A549 (cell line): ENCODE measurements at regions of chr13 and their contacts with region 1.

Region 1: DNA sequence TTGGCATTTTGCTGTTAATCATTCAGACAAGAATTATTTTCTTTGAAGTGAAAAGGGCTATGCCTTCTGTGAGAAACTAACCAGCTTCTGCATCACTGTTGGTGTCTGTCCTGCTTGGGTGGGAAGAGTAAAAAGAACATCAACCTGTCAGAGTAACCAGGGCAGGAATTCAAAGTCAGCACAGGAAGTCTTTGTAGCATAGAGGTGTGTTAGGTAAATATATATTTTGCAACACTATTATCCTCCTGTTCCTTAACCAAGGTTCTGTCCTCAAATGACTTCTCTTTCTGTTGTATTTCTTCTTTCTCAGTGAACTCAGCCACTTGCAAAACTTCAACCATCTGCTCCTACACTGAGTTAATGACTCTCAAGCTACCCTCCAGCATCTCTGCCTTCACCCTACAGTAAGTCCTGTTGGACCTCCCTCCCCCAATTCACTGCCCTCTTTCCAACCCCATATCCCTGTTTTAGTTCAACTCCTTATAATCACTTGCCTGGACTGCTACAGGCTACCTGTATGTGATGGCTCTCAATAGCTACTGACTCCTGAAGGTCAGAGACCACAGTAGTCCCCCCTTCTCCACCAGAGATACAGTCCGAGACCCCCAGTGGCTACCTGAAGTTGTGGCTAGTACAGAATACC is 49.9 kb downstream of the SMAD9 start:
- DNase-seq: no peak
- ATAC-seq: no peak
- H3K4me3 ChIP-seq: no peak overlapping the region
- H3K27ac ChIP-seq: no peak overlapping the region
- H3K4me1 ChIP-seq: no peaks in the 10 kb centered on the region
- CTCF ChIP-seq: no peak
- EP300 ChIP-seq: no peak
- POLR2A ChIP-seq: no peak
- RAD21 ChIP-seq: no peak

Region 2: GRCh38 chr13:36858290-36858689 is 11.9 kb before region 1 on chr13:
- CTCF ChIA-PET with region 1: interaction called, 22 read pairs
- POLR2A ChIA-PET with region 1: no interaction called
- DNase-seq: peak; percentile 7 to 53
- ATAC-seq: peak; percentile 89 to 91
- H3K4me3 ChIP-seq: no peak overlapping the region
- H3K27ac ChIP-seq: no peak overlapping the region
- H3K4me1 ChIP-seq: no peaks in the 10 kb centered on the region
- CTCF ChIP-seq: peak; percentile 48
- EP300 ChIP-seq: no peak
- POLR2A ChIP-seq: no peak
- RAD21 ChIP-seq: peak; percentile 34 to 35; a peak in 4 of 5 replicates